RWPE1 (cell line): ENCODE measurements at regions of chr21 and their contacts with region 1.

Region 1: DNA sequence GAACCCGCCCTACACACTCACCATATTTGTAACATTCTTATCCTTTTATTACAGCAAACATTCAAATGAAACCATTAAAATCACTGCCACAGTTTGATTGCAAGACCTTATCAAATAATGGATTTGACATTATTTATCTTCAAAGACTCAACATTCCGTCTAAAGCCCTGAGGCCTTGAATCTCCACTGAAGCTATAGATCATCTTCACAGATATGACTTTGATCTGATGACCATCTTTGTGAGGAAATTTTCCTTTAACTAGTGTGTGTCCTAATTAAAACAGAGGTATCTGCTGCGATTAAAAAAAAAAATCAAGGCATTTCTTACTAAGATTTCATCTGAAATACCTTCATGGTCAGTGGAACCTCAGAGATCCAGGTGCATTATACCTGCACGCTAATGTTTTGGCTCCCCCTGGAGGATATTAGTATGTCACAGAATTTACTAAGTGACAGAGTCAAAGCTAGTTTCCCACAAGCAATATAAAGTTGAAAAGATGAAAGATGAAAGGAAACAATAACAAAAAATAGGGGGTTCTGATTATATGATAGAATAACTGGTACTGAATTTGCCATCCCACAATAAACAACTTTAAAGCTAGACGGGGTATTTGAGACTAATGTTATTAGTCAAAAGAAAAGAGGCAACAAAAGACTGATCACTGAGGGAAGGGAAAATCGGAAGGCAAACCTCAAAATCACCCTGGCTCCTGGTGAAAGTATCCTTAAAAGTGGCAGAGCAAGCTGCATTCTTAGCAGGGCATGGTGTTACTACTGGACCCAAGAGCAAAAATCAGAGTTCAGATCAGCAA is 923.4 kb downstream of the NCAM2 start:
- DNase-seq: peak; percentile 7
- H3K27ac ChIP-seq: no peak overlapping the region
- CTCF ChIP-seq: peak; percentile 68

Region 2: DNA sequence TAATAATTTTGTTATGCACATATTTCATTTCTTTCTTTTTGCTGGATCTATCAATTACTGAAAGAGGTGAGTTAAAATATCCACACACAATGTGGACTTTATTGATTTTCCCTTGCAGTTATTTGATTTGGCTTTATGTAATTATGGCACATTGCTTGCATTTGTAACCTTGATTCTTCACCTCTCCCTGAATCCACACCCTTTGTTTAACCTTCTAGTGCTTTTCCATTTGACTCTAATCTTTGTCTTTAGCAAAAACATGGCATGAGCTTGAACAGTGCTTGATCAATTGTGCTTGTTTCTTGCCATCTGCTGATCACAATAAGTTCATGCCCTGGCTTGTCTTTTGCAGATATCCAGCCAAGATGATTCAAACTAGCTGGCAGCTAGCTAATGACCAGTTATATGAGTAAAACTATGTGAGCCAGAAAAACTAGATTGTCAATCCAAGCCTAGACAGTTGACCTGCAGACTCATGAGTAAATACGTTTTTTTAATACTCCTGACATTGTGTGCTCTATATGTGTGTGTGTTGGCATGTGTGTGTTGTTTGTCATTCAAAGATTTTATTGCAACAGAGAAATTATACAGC is 24.3 kb before region 1 on chr21:
- CTCF ChIA-PET with region 1: interaction called, 11 read pairs
- POLR2A ChIA-PET with region 1: no interaction called
- DNase-seq: peak; percentile 67
- H3K27ac ChIP-seq: no peak overlapping the region
- CTCF ChIP-seq: no peak